HCT116 (cell line): ENCODE measurements at regions of chr10 and their contacts with region 1.

Region 1: DNA sequence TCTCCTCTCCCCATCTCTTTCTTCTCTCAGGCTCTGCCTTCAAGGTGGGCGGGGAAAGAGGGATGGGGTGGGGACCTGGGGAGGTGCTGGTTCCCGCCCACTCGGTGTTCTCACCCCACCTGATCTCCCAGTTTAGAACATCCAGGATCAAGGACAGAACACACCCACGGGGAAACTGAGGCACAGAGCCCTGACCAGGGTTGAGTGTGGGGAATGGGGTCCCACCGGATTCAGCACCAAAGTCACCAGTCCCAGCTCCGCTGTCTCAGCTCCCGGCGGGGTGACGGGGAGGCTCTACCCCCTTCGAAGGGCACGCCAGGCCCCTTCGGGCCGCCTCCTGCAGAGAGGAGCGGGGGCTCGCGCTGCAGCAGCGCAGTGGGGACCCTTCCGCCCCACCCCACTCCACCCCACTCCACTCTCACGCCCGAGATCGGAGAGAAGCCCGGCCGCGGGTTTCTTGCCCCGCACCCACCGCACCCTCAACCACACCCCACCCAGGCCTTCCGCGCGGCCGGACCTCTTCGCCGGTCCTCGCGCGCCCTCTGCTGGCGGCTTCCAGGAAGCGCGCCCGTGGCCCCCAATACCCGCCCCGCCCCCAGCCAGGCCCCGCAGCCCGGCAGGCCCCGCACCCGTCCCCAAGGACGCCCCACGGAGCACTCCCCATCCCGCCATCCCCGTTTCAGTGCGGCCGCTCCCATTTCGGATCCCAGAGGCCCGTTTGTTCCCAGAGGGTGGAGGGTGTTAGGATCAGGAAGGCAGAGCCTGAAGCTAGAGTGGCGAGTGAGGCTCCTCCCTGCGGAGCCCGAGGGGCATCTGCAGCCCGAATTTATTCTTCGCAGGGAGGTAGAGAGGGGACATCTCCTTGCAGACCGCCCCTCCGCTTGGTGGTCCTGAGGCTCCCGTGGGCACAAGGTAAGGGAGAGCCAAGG is 18.0 kb downstream of the POLL start:
- DNase-seq: peak; percentile 65
- ATAC-seq: peak; percentile 89
- H3K4me3 ChIP-seq: peak overlapping the region; percentile 62 to 66
- H3K27ac ChIP-seq: peak overlapping the region; percentile 48; the same call in 1 of the 2 replicates
- H3K4me1 ChIP-seq: peaks cover 11 to 22% of the 10 kb centered on the region in 2 experiments
- H3K27me3 ChIP-seq: no peaks in the 10 kb centered on the region
- CTCF ChIP-seq: peak in 2 of 3 experiments; percentile 82 to 87; a peak in 4 of 6 replicates
- POLR2A ChIP-seq: peak; percentile 11
- RAD21 ChIP-seq: no peak

Region 2: DNA sequence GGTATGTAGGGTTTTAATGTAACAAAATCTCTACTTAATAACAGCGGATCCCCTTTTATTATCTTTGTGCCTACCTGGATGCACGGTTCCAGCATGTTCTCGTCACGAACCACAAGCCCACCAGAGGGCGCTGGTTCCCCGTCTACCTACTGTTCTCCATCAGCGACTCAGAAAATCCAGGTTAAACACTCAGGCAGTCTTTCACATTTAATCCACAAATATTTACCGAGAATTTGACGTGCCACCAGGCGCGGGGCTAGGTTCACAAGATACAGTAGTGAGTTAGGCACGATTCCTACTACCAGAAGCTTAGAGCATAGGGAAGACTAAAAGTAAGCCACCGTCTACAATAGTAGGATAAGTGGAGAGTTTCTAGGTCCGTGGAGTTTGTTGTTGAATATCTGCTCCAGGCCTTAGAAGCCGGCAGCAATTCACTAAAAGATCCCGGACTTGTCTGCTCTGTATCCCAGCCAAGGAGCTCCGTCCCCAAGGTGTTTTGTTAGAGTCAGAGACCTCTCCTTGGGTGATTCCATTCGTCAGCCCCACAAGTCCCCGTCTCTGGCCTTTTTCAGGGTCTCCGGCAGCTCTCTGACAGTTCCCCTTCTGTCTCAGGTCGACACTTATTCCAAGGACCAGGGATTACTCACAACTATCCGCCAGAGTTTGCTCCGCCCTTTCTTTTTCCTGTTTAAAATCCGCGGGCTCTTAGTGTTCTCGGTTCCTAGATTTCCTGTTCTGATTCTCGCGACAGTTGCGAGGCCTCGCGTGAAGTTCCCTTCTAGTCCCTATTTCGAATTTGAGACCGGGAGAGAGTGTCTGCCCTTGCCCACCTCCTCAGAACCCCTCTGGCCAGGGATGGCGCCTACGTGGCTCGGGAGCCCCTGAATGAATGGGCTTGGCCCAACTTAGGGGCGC is 509.8 kb before region 1 on chr10:
- CTCF ChIA-PET with region 1: no interaction called
- POLR2A ChIA-PET with region 1: no interaction called
- RAD21 ChIA-PET with region 1: no interaction called
- intact Hi-C with region 1: loop called (anchors 10 kb)
- DNase-seq: peak; percentile 98
- ATAC-seq: peak; percentile 67
- H3K4me3 ChIP-seq: peak overlapping the region; percentile 80 to 84
- H3K27ac ChIP-seq: peak overlapping the region; percentile 99
- H3K4me1 ChIP-seq: peaks cover 42 to 51% of the 10 kb centered on the region in 2 experiments
- H3K27me3 ChIP-seq: no peaks in the 10 kb centered on the region
- CTCF ChIP-seq: peak in 2 of 3 experiments; percentile 98 to 99; a peak in 4 of 6 replicates
- POLR2A ChIP-seq: peak; percentile 37
- RAD21 ChIP-seq: no peak

Region 3: GRCh38 chr10:101161494-101162299 is 408.4 kb before region 1 on chr10:
- CTCF ChIA-PET with region 1: interaction called, 8 read pairs
- POLR2A ChIA-PET with region 1: interaction called, 3 read pairs
- RAD21 ChIA-PET with region 1: interaction called in 1 of 2 experiments, 4 read pairs
- intact Hi-C with region 1: loop called (anchors 1 kb)
- DNase-seq: peak; percentile 72
- ATAC-seq: peak; percentile 95
- H3K4me3 ChIP-seq: peak overlapping the region; percentile 38 to 47
- H3K27ac ChIP-seq: no peak overlapping the region
- H3K4me1 ChIP-seq: peaks cover 4 to 15% of the 10 kb centered on the region in 2 experiments; a peak in 3 of 4 replicates
- H3K27me3 ChIP-seq: no peaks in the 10 kb centered on the region
- CTCF ChIP-seq: peak; percentile 95 to 100 (median 99)
- POLR2A ChIP-seq: no peak
- RAD21 ChIP-seq: peak; percentile 99

Region 4: DNA sequence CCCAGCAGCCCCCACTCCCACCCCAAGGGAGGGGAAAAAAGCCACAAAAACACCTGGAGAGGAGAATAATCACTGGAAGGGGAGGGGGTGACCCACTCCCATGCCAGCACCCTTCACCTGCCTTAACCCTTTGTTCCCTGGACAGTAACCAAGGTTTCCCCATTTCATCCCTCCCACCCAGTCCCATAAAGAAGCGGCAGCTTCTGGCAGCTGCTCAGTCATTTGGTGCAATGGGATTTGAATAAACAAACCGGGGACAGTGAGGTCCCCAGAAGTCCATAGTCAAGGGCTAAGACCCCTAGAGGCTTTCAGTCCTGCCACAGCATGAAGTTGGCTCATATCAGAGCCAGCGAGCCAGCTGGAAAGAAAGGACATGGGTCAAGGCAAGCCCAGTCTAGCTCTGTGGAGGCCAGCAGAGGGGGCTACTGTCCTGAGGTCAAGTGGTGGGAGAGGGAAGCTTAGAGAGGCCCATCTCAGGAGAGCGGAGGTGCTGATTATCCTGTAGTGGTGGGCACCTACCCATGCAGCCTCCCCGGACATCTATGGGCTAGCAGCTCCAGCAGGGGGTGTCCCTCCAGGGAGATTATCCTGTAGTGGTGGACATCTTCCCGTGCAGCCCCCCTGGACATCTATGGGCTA is 282.0 kb before region 1 on chr10:
- CTCF ChIA-PET with region 1: interaction called, 26 read pairs
- POLR2A ChIA-PET with region 1: no interaction called
- RAD21 ChIA-PET with region 1: interaction called in 1 of 2 experiments, 4 read pairs
- intact Hi-C with region 1: no loop called
- DNase-seq: peak; percentile 41
- ATAC-seq: peak; percentile 86
- H3K4me3 ChIP-seq: no peak overlapping the region
- H3K27ac ChIP-seq: no peak overlapping the region
- H3K4me1 ChIP-seq: no peaks in the 10 kb centered on the region; a peak in 1 of 4 replicates
- H3K27me3 ChIP-seq: no peaks in the 10 kb centered on the region
- CTCF ChIP-seq: peak; percentile 34 to 57 (median 45); a peak in 5 of 6 replicates
- POLR2A ChIP-seq: no peak
- RAD21 ChIP-seq: peak; percentile 72

Region 5: DNA sequence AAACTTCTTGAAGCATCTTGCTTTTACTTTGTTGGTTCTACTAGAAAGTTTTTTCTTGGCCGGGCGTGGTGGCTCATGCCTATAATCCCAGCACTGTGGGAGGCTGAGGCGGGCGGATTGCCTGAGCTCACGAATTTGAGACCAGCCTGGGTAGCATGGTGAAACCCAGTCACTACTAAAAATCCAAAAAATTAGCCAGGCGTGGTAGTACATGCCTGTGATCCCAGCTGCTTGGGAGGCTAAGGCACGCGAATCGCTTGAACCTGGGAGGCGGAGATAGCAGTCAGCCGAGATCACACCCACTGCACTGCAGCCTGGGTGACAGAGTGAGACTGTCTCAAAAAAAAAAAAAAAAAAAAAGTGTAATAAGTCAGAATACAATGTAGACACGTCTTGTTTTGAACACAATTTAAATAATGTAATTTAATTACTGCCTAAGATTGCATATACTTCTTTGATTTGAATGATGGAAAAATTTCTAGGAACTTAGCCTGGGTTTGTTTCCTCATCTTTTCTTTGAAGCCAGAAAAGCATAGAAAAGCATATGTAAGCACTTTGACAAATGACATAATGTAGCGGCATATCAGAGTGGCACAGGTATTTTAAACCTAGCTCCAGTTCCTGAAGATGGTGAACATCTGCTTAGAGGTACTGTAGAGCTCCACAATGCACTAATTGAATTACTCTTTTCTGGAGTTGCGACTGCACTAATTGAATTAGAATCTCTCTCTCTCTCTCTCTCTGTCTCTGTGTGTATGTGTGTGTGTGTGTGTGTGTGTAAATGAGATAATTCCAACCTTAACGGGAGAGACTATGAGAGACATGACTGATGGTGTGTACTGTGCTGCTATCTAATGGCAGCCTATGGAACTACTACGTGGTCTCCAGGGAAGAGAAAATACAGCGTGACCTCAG is 128.3 kb before region 1 on chr10:
- CTCF ChIA-PET with region 1: interaction called, 16 read pairs
- POLR2A ChIA-PET with region 1: no interaction called
- RAD21 ChIA-PET with region 1: no interaction called
- intact Hi-C with region 1: no loop called
- DNase-seq: peak; percentile 80
- ATAC-seq: peak; percentile 99
- H3K4me3 ChIP-seq: no peak overlapping the region
- H3K27ac ChIP-seq: no peak overlapping the region
- H3K4me1 ChIP-seq: no peaks in the 10 kb centered on the region
- H3K27me3 ChIP-seq: no peaks in the 10 kb centered on the region
- CTCF ChIP-seq: peak; percentile 78 to 96 (median 84)
- POLR2A ChIP-seq: no peak
- RAD21 ChIP-seq: peak; percentile 97

Region 6: DNA sequence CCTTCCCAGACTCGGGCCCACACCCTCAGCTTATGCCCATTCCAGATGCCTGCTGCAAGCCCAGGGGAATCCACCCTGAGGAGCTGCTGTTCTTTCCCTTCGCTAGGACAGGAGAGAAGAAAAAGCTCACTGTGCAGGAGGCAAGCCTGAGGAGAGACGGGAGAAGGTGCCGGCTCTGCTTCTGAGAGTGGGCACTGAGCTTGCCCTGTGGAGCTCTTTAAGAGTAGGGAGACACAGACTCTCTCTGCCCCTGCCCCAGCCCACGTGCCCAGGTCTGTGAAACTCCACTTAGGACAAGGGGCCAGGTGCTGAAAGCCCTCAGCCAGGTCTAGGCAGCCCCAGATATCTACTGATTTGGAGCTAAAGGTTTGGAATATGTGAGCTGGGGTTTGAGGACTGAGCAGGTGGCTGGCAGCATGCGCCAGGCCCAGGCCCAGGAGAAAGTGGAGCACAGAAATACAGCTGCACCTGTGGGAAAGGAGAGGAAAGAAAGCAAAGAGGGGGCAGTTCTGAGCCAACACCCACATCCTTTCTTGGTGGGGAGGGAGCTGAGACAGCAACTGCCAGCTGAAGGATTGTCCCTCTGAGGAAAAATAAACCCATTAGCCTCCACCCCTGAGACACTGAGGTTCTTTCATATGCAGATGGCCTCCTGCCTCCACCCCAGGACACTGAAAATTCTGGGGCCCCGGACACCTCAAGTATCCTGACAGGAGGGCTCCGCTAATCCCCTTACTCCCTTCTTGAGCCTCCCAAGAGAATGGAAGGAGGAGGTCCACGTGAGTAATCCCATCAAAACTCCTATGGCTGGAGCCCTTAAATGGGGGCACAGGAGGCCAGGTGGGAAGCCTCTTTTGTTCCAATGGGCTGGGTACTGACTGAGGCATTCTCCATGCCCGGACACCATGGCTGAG is 10.6 kb after region 1 on chr10:
- CTCF ChIA-PET with region 1: interaction called, 14 read pairs
- POLR2A ChIA-PET with region 1: no interaction called
- RAD21 ChIA-PET with region 1: no interaction called
- intact Hi-C with region 1: no loop called
- DNase-seq: no peak
- ATAC-seq: no peak
- H3K4me3 ChIP-seq: no peak overlapping the region
- H3K27ac ChIP-seq: no peak overlapping the region
- H3K4me1 ChIP-seq: peaks cover 0 to 5% of the 10 kb centered on the region in 2 experiments; a peak in 1 of 4 replicates
- H3K27me3 ChIP-seq: no peaks in the 10 kb centered on the region
- CTCF ChIP-seq: no peak
- POLR2A ChIP-seq: no peak
- RAD21 ChIP-seq: no peak

Region 7: DNA sequence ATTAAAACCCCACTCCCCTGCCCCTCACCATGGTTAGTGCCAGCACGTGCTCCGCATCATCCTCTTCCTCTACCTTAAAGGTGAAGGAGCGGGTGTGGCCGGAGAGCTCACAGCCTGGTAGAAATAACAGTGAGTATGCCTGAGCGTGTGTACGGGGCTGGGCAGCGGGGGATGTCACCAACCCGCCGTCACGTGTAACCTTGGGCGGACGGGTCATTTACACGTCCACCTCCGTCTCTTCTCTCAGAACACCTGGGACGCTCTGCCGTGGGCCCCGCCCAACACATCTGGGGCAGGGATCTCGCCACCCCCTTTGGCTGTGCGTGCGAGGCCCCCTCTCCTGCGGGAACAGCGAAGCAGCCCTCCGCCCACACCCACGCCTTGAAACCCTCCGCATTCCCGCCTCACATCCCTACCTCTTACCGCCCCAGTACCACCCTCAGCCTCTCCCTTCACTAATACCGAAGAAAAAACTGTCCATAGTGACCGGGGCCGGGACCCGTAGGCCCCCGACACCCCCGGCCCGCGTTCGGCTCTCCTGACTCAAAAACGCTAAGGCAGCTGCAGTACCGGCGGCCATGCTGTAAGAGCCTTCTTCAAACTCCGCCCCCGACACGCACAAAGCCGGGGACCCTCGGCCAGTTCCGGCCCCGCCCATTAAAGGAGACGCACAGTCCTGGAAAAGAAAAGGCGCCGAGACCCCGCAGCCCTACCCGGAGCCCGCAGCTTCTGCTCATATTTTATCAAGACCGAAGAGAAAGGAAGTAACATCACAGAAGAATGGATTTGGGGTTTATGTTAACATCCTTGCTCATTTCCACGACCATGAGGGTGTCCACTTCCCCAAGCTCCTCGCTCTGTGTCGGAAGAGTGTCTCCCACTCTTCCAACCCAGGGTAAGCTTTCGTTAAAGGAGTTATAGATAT is 213.0 kb after region 1 on chr10 and contains the start of gene NPM3:
- CTCF ChIA-PET with region 1: interaction called, 18 read pairs
- POLR2A ChIA-PET with region 1: no interaction called
- RAD21 ChIA-PET with region 1: interaction called in 1 of 2 experiments, 3 read pairs
- intact Hi-C with region 1: no loop called
- DNase-seq: peak; percentile 59
- ATAC-seq: peak; percentile 74
- H3K4me3 ChIP-seq: peak within 1 kb of the TSS; percentile 74 to 90
- H3K27ac ChIP-seq: peak within 1 kb of the TSS; percentile 66
- H3K4me1 ChIP-seq: peaks cover 19 to 45% of the 10 kb centered on the region in 2 experiments
- H3K27me3 ChIP-seq: no peaks in the 10 kb centered on the region
- CTCF ChIP-seq: no peak
- POLR2A ChIP-seq: peak; percentile 65
- RAD21 ChIP-seq: no peak
- total RNA-seq, gene NPM3: 267 TPM

Region 8: DNA sequence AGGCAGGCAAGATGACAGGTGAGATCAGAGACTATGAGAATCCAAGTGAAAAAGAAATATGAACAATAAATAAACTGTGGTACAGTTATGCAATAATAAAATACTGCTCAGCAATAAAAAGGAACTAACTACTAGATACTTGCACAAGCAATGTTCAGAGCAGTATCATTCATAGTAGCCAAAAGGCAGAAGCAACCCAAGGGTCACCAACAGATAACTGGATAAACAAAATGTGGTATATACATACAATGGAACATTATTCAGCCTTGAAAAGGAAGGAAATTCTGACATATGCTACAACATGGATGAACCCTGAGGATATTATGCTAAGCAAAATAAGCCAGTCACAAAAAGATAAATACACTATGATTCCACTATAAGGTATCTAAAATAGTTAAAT is 350.4 kb after region 1 on chr10:
- CTCF ChIA-PET with region 1: no interaction called
- POLR2A ChIA-PET with region 1: no interaction called
- RAD21 ChIA-PET with region 1: no interaction called
- intact Hi-C with region 1: no loop called
- DNase-seq: no peak
- ATAC-seq: no peak
- H3K4me3 ChIP-seq: no peak overlapping the region
- H3K27ac ChIP-seq: no peak overlapping the region
- H3K4me1 ChIP-seq: no peaks in the 10 kb centered on the region
- H3K27me3 ChIP-seq: no peaks in the 10 kb centered on the region
- CTCF ChIP-seq: no peak
- POLR2A ChIP-seq: no peak
- RAD21 ChIP-seq: no peak